IMR-90 (cell line): ENCODE measurements at regions of chr11 and their contacts with region 1.

Region 1: DNA sequence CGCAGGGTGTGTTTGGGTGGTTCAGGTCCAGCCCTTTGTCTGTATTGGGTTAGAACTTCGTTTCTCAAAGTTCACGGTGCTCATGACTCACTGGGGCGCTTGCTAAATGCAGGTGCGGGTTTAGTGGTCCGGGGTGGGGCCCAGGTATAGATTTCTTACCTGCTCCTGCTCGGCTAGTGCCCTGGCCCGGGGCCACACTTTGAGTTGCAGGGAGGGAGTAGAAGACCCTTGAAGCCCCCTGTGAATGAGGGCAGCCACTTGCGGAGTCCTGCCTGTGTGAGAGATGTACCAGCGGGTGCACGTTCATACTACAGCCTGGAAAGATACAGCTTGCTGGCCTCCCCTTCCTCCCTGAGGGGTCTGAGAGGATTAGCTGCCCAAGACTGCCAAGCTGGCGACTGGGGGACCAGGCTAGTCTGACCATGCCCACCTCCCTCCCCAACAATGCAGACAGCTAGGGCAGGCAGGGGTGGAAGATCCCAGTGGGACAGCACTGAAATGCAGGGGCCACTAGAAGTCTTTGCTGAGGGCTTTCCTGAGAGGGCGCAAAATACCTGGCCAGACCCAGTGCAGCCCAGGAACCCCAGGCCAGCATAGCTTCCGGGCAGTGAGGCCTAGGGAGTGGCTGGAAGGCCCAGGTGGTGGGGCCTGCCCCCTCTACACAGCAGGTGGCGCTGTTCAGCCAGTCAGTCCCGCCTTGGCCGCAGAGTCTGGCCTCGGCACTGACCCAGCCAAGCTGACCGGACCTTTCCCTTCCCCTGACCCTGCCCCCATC is 5.1 kb upstream of the MYRF start:
- DNase-seq: peak; percentile 59
- ATAC-seq: peak; percentile 86
- H3K4me3 ChIP-seq: no peak overlapping the region
- H3K27ac ChIP-seq: no peak overlapping the region
- H3K4me1 ChIP-seq: no peaks in the 10 kb centered on the region; the same call in 1 of the 2 replicates
- H3K27me3 ChIP-seq: no peaks in the 10 kb centered on the region; the same call in 1 of the 2 replicates
- CTCF ChIP-seq: peak; percentile 88
- POLR2A ChIP-seq: no peak
- RAD21 ChIP-seq: peak; percentile 84

Region 2: GRCh38 chr11:61632096-61632495 is 115.3 kb before region 1 on chr11:
- CTCF ChIA-PET with region 1: no interaction called
- POLR2A ChIA-PET with region 1: no interaction called
- dilution Hi-C with region 1: no loop called
- in situ Hi-C with region 1: no loop called
- intact Hi-C with region 1: no loop called
- DNase-seq: no peak
- ATAC-seq: no peak
- H3K4me3 ChIP-seq: no peak overlapping the region
- H3K27ac ChIP-seq: no peak overlapping the region
- H3K4me1 ChIP-seq: no peaks in the 10 kb centered on the region
- H3K27me3 ChIP-seq: peaks cover 21% of the 10 kb centered on the region
- CTCF ChIP-seq: no peak
- POLR2A ChIP-seq: no peak
- RAD21 ChIP-seq: no peak

Region 3: GRCh38 chr11:61654397-61654829 is 93.0 kb before region 1 on chr11:
- CTCF ChIA-PET with region 1: no interaction called
- POLR2A ChIA-PET with region 1: no interaction called
- dilution Hi-C with region 1: no loop called
- in situ Hi-C with region 1: no loop called
- intact Hi-C with region 1: no loop called
- DNase-seq: no peak
- ATAC-seq: no peak
- H3K4me3 ChIP-seq: no peak overlapping the region
- H3K27ac ChIP-seq: no peak overlapping the region
- H3K4me1 ChIP-seq: no peaks in the 10 kb centered on the region
- H3K27me3 ChIP-seq: peaks cover 32% of the 10 kb centered on the region
- CTCF ChIP-seq: no peak
- POLR2A ChIP-seq: no peak
- RAD21 ChIP-seq: no peak

Region 4: GRCh38 chr11:61776551-61777075 is 29.2 kb after region 1 on chr11:
- CTCF ChIA-PET with region 1: interaction called, 5 read pairs
- POLR2A ChIA-PET with region 1: no interaction called
- dilution Hi-C with region 1: no loop called
- in situ Hi-C with region 1: no loop called
- intact Hi-C with region 1: loop called (anchors 1 kb)
- DNase-seq: peak; percentile 68
- ATAC-seq: peak; percentile 91
- H3K4me3 ChIP-seq: no peak overlapping the region
- H3K27ac ChIP-seq: no peak overlapping the region
- H3K4me1 ChIP-seq: no peaks in the 10 kb centered on the region
- H3K27me3 ChIP-seq: no peaks in the 10 kb centered on the region
- CTCF ChIP-seq: peak; percentile 84
- POLR2A ChIP-seq: no peak
- RAD21 ChIP-seq: peak; percentile 79

Region 5: GRCh38 chr11:62508268-62509058 is 761.1 kb after region 1 on chr11:
- CTCF ChIA-PET with region 1: no interaction called
- POLR2A ChIA-PET with region 1: no interaction called
- dilution Hi-C with region 1: no loop called
- in situ Hi-C with region 1: no loop called
- intact Hi-C with region 1: no loop called
- DNase-seq: peak; percentile 36
- ATAC-seq: peak; percentile 80
- H3K4me3 ChIP-seq: no peak overlapping the region
- H3K27ac ChIP-seq: peak overlapping the region; percentile 15; the same call in 1 of the 2 replicates
- H3K4me1 ChIP-seq: peaks cover 4% of the 10 kb centered on the region
- H3K27me3 ChIP-seq: no peaks in the 10 kb centered on the region
- CTCF ChIP-seq: peak; percentile 44
- POLR2A ChIP-seq: no peak
- RAD21 ChIP-seq: peak; percentile 43